Activated CD4-positive, alpha-beta memory T cell treated with anti-CD3 and anti-CD28 coated beads for 36 hours (primary cell): ENCODE measurements at regions of chr19 and their contacts with region 1.

Region 1: DNA sequence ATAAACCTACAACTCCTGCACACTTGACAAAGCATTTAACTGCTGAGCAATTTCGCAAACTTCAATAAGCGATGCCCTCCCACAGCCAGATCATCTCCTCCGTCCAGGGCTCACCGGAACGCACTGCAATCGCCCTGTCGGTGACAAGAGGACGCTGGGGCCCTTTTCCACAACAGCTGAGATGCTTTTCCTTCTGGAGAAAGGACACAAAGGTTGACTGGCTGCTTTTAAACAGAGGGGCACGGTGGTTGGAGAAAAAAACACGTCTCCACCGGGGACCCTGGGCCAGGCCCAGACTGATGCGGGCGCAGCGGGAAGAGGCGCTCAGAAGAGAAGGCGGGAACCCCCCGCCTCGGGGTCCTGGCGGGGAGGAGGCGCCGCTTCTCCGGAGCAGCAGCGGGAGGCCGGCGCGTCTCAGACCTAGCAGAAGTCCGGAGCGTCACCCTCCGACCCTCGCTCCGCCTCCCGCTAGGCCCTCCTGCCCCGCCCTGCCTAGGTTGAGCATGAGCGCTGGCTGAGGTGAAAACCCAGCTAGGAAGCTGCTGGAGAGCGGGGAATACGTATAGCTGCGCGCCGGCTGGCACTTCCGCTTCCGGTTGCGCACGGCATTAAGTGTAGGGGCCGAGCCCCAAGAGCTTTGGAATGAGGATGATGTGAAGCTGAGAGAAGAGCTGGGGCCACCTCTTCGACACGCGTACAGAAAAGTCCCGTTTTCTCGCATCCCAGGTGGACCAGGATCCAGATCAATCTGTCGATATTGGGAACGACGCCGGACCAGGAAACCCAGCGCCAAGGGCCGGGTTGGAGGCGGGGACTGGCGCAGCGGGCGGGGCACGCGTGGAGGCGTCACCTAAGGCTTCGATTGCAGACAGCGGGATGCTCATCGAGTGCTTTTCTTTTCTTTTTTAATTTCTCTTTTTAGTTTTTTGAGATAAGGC is at the start of gene ZNF846:
- DNase-seq: peak; percentile 96
- H3K4me3 Mint-ChIP-seq: peak within 1 kb of the TSS; percentile 97
- H3K27ac Mint-ChIP-seq: peak within 1 kb of the TSS; percentile 98
- H3K4me1 Mint-ChIP-seq: peaks cover 6% of the 10 kb centered on the region
- H3K27me3 Mint-ChIP-seq: no peaks in the 10 kb centered on the region
- total RNA-seq, gene ZNF846: 3.9 to 4.9 TPM

Region 2: DNA sequence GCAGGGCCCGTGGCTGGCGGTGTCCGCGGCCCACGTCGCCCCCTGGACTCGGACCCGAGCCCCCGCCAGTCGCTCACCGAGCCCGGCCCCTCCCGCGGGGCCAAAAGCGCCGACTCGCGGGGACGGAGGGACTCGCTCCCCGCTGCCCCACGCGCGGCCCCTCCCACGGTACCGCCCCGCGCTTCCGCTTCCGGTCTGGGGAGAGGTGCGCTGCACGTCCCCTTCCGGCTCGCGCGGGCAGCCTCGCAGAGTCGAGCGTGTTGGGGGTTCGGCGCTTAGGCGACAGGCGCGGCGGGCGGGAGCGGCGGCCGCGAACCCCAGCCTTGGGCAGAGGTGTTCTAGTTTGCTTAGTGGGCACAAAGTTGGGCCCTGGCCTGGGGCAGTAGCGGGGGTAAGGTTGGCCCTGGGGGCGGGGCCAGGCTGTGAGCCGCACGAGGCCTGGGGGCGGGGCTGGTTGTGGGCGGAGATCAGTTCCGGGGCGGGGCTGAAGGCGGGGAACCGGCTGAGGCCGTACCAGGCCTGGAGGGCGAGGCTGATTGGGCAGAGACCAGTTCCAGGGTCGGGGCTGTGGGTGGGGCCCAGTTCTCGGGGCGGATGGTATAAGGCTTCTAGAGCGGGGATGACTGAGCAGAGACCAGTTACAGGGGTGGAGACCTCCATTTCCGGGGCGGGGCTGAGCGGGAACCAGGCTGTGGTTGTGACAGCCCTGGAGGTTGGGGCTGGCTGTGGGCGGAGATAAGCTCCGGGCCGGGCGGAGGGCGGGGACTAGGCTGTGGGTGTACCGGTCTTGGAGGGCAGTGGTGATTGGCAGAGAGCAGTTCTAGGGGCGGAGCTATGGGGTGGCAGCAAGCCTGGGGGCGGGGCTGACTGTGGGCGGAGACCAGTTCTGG is 936.1 kb before region 1 on chr19 and contains the starts of genes MBD3L1 and ZNF558:
- CTCF ChIA-PET with region 1: no interaction called
- POLR2A ChIA-PET with region 1: no interaction called
- intact Hi-C with region 1: loop called (anchors 5 kb)
- DNase-seq: peak; percentile 99
- H3K4me3 Mint-ChIP-seq: peak within 1 kb of the TSS; percentile 81
- H3K27ac Mint-ChIP-seq: peak within 1 kb of the TSS; percentile 94
- H3K4me1 Mint-ChIP-seq: peaks cover 22% of the 10 kb centered on the region
- H3K27me3 Mint-ChIP-seq: no peaks in the 10 kb centered on the region
- total RNA-seq, gene MBD3L1: not detected
- total RNA-seq, gene ZNF558: 27.3 to 30.3 TPM

Region 3: DNA sequence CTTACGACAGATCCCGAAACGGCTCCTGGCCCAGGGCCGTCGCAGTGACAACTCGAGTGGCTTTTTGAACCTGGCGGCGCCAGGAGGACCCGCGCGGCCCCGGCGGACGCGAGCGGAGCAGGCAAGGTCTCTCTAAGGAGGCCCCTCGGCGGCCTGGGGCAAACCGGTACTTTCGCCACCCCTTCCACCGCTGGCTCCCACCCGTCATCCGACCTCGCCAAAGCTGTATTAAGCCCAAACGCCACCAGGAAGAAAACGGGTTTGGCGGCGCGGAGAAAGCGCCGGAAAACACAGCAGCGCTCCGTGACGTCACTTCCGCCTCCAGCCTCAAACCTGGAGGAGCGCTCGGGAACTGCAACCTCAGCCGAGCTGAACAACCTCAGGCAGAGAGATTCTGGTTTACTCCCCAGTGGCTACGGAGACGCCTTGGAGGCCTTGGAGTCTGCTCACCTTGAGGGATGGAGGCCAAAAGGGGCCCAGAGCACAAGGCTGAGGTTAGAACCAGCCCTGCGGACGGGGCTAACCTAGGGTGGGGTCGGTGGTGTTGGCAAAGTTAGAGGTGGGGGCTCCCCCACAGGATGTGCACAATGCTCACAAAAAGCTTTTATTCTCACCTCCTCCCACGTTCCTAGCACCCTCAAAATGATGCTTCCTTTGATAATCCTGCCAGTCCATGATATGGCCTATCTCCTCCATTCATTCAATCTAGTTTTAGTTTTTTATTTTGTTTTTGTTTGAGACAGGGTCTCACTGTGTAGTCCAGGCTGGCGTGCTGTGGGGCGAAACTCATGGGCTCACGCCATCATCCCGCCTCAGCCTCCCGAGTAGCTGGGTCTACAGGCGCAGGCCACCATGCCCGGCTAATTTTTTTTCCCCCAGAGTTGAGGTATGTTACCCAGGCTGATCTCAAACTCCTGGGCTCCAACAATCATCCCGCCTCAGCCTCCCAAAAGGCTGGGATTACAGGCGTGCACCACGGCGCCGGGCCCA is 332.9 kb before region 1 on chr19 and contains the start of gene ZNF266:
- CTCF ChIA-PET with region 1: no interaction called
- POLR2A ChIA-PET with region 1: interaction called, 3 read pairs
- intact Hi-C with region 1: loop called (anchors 1 kb)
- DNase-seq: peak; percentile 96
- H3K4me3 Mint-ChIP-seq: peak within 1 kb of the TSS; percentile 94
- H3K27ac Mint-ChIP-seq: peak within 1 kb of the TSS; percentile 98
- H3K4me1 Mint-ChIP-seq: peaks cover 33% of the 10 kb centered on the region
- H3K27me3 Mint-ChIP-seq: no peaks in the 10 kb centered on the region
- total RNA-seq, gene ZNF266: 20.0 to 23.4 TPM

Region 4: GRCh38 chr19:9621156-9622037 is 147.0 kb before region 1 on chr19 and contains the start of gene ZNF561:
- CTCF ChIA-PET with region 1: interaction called, 3 read pairs
- POLR2A ChIA-PET with region 1: no interaction called
- intact Hi-C with region 1: loop called (anchors 1 kb)
- DNase-seq: peak; percentile 91
- H3K4me3 Mint-ChIP-seq: peak within 1 kb of the TSS; percentile 92
- H3K27ac Mint-ChIP-seq: peak within 1 kb of the TSS; percentile 99
- H3K4me1 Mint-ChIP-seq: peaks cover 22% of the 10 kb centered on the region
- H3K27me3 Mint-ChIP-seq: no peaks in the 10 kb centered on the region
- total RNA-seq, gene ZNF561: 24.7 to 25.5 TPM

Region 5: GRCh38 chr19:9674663-9675357 is 93.6 kb before region 1 on chr19 and contains the start of gene ZNF562:
- CTCF ChIA-PET with region 1: no interaction called
- POLR2A ChIA-PET with region 1: interaction called, 7 read pairs
- intact Hi-C with region 1: loop called (anchors 1 kb)
- DNase-seq: peak; percentile 89
- H3K4me3 Mint-ChIP-seq: peak within 1 kb of the TSS; percentile 96
- H3K27ac Mint-ChIP-seq: peak within 1 kb of the TSS; percentile 92
- H3K4me1 Mint-ChIP-seq: peaks cover 26% of the 10 kb centered on the region
- H3K27me3 Mint-ChIP-seq: no peaks in the 10 kb centered on the region
- total RNA-seq, gene ZNF562: 35.3 to 36.1 TPM

Region 6: GRCh38 chr19:9785367-9786331 is 17.2 kb after region 1 on chr19:
- CTCF ChIA-PET with region 1: interaction called, 3 read pairs
- POLR2A ChIA-PET with region 1: interaction called, 5 read pairs
- intact Hi-C with region 1: loop called (anchors 1 kb)
- DNase-seq: peak; percentile 99
- H3K4me3 Mint-ChIP-seq: peak overlapping the region; percentile 84
- H3K27ac Mint-ChIP-seq: peak overlapping the region; percentile 85
- H3K4me1 Mint-ChIP-seq: peaks cover 16% of the 10 kb centered on the region
- H3K27me3 Mint-ChIP-seq: no peaks in the 10 kb centered on the region

Region 7: GRCh38 chr19:9818734-9819589 is 50.5 kb after region 1 on chr19 and contains the start of gene FBXL12:
- CTCF ChIA-PET with region 1: no interaction called
- POLR2A ChIA-PET with region 1: no interaction called
- intact Hi-C with region 1: loop called (anchors 2 kb)
- DNase-seq: peak; percentile 100
- H3K4me3 Mint-ChIP-seq: peak within 1 kb of the TSS; percentile 88
- H3K27ac Mint-ChIP-seq: peak within 1 kb of the TSS; percentile 91
- H3K4me1 Mint-ChIP-seq: peaks cover 28% of the 10 kb centered on the region
- H3K27me3 Mint-ChIP-seq: no peaks in the 10 kb centered on the region
- total RNA-seq, gene FBXL12: 20.7 to 22.0 TPM